Right ventricle myocardium inferior (tissue), 1 donor: ENCODE measurements at regions of chr14 and their contacts with region 1.

Region 1: GRCh38 chr14:60248697-60249318 is at the start of gene PPM1A:
- DNase-seq: peak; percentile 97
- ATAC-seq: peak; percentile 94
- total RNA-seq, gene PPM1A: 119 TPM

Region 2: GRCh38 chr14:60091550-60092530 is 157.0 kb before region 1 on chr14 and contains the start of gene PCNX4:
- intact Hi-C with region 1: loop called (anchors 2 kb)
- DNase-seq: peak; percentile 97
- ATAC-seq: peak; percentile 98
- total RNA-seq, gene PCNX4: 23.5 TPM

Region 3: GRCh38 chr14:60304509-60304908 is 55.7 kb after region 1 on chr14:
- intact Hi-C with region 1: loop called (anchors 5 kb)
- DNase-seq: no peak
- ATAC-seq: peak; percentile 72

Region 4: DNA sequence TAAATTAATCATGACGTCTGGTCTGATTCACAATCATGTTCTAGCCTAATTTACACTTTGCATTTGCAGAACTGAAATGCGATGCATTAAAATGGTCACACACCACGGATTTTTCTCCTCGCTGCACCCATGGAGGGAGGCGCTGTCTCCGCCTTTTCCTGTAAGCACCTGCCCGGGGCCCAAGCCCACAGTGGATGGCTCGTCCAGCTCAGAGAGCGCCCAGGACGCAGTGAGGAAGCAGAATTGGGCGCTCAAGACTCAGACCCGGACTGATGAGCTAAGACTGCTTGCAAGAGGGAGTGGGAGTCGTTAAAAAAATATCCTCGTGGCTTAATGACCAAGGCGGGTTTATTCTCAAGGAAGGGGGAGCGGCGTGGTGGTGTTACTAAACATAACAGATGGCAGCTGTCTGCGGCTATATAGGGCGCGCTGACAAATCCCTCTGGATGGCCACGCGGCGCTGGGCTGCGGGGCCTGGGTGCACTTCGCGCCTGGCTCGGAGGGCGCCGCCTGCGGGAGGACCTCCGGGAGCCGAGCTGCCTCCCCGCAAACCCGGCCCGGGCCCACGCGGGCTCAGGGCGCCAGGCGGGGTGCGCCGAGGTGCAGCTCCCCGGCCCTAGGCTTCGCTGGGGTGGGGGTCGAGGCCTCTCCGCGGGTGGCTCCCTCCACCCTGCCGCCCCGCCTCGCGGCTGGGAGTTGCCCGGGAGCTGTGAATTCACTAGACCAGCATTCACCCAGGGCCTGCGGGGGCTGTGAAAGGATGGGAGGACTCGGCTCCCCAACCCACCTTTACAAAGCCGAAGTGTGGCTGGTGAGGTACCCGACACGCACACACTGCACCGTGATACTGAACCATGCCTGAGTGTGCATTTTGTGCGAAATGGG is 78.9 kb after region 1 on chr14:
- intact Hi-C with region 1: loop called (anchors 5 kb)
- DNase-seq: peak; percentile 67
- ATAC-seq: peak; percentile 69